ENCODE measurements at regions of chr6 and their contacts with region 1.

Region 1: GRCh38 chr6:158605266-158605878 is 39.2 kb downstream of the DYNLT1 start:
- DNase-seq: peak; percentile 61 to 90
- H3K4me3 ChIP-seq: no peak overlapping the region
- H3K27ac ChIP-seq: no peak overlapping the region
- H3K4me1 ChIP-seq: peaks cover 0 to 9% (median 3%) of the 10 kb centered on the region in 4 donors
- H3K27me3 ChIP-seq: no peaks in the 10 kb centered on the region
- CTCF ChIP-seq: peak in 5 of 7 experiments; percentile 57 to 89 (median 67)
- EP300 ChIP-seq: no peak
- POLR2A ChIP-seq: no peak

Region 2: DNA sequence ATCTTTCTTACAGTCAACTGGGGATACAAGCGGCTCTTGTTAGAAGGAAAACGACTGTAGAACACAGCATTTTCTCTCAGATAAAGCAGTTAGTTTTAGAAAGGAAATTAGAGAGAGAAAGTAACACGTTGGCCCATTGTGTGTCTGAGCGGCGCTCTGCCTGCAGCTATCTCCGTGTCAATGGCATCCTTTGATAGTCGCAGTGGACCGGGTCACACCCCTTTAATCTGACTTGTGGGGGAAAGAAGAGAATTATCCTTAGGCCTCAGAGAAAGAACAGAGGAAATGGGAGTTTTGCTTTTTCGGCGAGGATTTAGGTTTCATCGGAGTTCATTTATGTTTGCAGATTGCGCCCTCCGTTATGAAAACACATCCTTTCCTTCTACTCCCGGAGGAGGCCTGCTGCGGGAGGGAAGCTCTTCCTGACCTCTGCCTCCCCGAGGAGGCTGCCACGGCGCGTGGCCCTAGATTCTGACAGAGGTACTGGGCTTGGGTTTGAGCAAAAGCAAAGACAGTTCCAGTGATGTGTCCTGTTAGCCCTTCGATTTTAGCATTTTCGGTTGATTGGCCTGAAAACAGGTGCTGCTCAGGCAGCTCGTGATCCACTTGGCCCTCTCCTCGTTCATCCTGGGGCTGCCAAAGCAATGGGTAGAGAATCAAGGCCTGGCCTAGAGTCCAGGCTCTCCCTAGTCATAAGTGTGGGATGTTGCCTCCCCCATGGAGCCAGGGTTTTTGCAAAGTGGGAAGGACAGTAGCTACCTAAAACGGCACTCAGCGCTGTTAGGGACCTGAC is 1149.4 kb before region 1 on chr6:
- intact Hi-C with region 1: no loop called
- DNase-seq: no peak
- H3K4me3 ChIP-seq: no peak overlapping the region
- H3K27ac ChIP-seq: no peak overlapping the region
- H3K4me1 ChIP-seq: peaks cover 5 to 7% (median 6%) of the 10 kb centered on the region in 4 donors
- H3K27me3 ChIP-seq: no peaks in the 10 kb centered on the region
- CTCF ChIP-seq: no peak
- EP300 ChIP-seq: no peak
- POLR2A ChIP-seq: no peak

Region 3: DNA sequence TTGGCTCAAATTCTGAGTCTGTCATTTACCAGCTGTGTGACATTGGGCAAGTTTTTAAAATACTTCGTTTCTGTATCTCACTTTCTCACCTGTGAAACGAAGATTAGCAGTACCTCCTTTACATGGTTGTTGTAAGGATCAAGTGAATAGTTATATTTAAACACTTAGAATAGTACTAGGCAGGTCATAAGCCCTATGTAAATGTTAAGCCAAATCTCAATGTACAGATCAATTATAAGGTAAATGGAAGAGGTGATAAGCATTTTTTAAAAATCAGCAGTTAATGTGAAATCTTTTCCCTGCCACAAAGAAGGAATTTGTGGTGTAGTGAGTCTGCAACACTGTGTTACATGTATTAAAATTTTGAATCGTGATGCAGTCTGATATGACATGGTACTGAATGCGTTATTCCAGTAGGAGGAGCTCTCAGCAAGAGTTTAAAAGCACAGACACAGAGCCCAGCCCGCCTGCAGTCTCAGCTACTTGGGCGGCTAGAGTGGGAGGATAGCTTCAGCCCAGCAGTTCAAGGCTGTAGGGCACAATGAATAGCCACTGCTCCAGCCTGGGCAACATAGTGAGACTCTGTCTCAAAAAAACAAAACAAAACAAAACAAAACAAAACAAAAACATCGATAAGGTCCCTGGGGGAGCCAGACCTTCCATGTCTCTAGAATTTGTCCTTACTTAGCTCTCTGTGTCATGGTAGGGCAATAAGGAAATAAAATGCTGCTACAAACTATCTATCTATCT is 391.3 kb before region 1 on chr6:
- intact Hi-C with region 1: loop called (anchors 10 kb)
- DNase-seq: peak; percentile 68 to 89
- H3K4me3 ChIP-seq: no peak overlapping the region
- H3K27ac ChIP-seq: no peak overlapping the region
- H3K4me1 ChIP-seq: peaks cover 0 to 1% (median 0%) of the 10 kb centered on the region in 4 donors
- H3K27me3 ChIP-seq: no peaks in the 10 kb centered on the region
- CTCF ChIP-seq: peak in 5 of 7 experiments; percentile 25 to 65 (median 54)
- EP300 ChIP-seq: no peak
- POLR2A ChIP-seq: no peak

Region 4: DNA sequence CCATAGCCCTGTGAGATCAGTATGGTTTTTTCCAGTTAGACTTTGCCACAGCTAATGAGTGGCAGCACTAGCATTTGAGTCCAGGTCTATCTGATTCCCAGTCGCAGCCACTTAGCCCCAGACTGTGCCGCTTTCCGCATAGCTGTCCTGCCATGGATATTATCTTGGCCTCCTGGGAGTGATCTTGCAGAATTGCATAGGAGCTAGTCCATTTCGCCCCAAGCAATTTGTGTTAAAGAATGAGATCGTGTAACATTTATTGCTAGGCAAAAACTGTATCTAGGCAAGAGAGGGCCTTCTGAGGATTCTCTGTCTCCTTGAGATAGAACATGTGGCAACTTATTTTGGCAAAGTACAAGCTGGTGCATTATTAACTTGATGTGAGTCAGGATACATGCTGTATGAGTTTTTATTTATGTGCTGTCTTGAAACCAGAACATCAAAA is 139.6 kb after region 1 on chr6:
- intact Hi-C with region 1: no loop called
- DNase-seq: no peak
- H3K4me3 ChIP-seq: no peak overlapping the region
- H3K27ac ChIP-seq: no peak overlapping the region
- H3K4me1 ChIP-seq: no peaks in the 10 kb centered on the region
- H3K27me3 ChIP-seq: no peaks in the 10 kb centered on the region
- CTCF ChIP-seq: no peak
- EP300 ChIP-seq: no peak
- POLR2A ChIP-seq: no peak

Measured in stomach (tissue), 19 donors.